SK-N-SH (cell line): ENCODE measurements at regions of chr7 and their contacts with region 1.

Region 1: GRCh38 chr7:29748286-29749108 is 57.8 kb upstream of the WIPF3 start:
- DNase-seq: peak; percentile 24
- H3K4me3 ChIP-seq: no peak overlapping the region; a peak in 1 of 4 replicates
- H3K27ac ChIP-seq: no peak overlapping the region
- H3K4me1 ChIP-seq: no peaks in the 10 kb centered on the region
- H3K27me3 ChIP-seq: 0 out of 2 replicates have a peak, but pooled peaks cover 3% of the 10 kb centered on the region
- CTCF ChIP-seq: peak; percentile 83
- EP300 ChIP-seq: no peak
- RAD21 ChIP-seq: peak; percentile 82

Region 2: DNA sequence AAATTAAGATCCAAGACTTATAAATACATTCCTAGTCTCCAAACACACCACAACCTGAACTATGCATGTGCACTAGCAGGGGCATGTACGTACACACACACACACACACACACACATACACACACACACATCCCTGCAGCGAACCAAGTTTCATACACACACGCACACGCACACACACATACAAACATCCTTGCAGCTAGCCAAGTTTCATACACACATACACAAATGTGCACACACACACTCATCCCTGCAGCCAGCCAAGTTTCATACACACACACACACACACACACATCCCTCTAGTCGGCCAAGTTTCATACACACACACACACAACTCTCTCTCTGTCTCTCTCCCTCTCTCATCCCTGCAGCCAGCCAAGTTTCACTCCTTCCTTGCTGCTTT is 24.9 kb before region 1 on chr7:
- CTCF ChIA-PET with region 1: interaction called, 12 read pairs
- POLR2A ChIA-PET with region 1: no interaction called
- DNase-seq: no peak
- H3K4me3 ChIP-seq: no peak overlapping the region
- H3K27ac ChIP-seq: no peak overlapping the region
- H3K4me1 ChIP-seq: no peaks in the 10 kb centered on the region; a peak in 1 of 4 replicates
- H3K27me3 ChIP-seq: no peaks in the 10 kb centered on the region
- CTCF ChIP-seq: no peak
- EP300 ChIP-seq: no peak
- RAD21 ChIP-seq: no peak

Region 3: GRCh38 chr7:29764227-29764626 is 15.7 kb after region 1 on chr7:
- CTCF ChIA-PET with region 1: interaction called, 14 read pairs
- POLR2A ChIA-PET with region 1: no interaction called
- DNase-seq: peak; percentile 20
- H3K4me3 ChIP-seq: no peak overlapping the region
- H3K27ac ChIP-seq: no peak overlapping the region
- H3K4me1 ChIP-seq: peaks cover 0 to 4% of the 10 kb centered on the region in 2 experiments; a peak in 1 of 4 replicates
- H3K27me3 ChIP-seq: peaks cover 8% of the 10 kb centered on the region; the same call in 1 of the 2 replicates
- CTCF ChIP-seq: no peak
- EP300 ChIP-seq: no peak
- RAD21 ChIP-seq: peak; percentile 51

Region 4: DNA sequence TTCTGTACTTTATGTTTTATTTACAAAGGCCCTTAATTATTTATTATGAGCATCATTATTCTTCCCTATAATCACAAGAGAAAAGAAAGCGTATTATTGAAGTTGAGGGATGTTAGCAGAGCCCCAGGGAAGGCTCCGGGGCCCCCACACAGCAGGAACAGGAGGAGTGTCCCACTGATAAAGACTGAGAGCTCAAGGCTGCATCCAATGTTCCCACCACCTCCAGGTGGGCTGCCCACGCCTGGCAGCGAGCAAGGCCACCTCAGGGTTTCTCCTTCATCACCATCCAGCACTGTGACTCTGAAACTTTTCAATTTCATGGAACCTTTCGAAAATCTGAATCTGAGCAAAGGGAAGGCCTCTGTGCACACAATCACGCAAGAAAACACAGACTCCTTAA is 21.9 kb after region 1 on chr7:
- CTCF ChIA-PET with region 1: interaction called, 10 read pairs
- POLR2A ChIA-PET with region 1: no interaction called
- DNase-seq: no peak
- H3K4me3 ChIP-seq: no peak overlapping the region
- H3K27ac ChIP-seq: peak overlapping the region in 1 of 2 experiments; percentile 89; a peak in 2 of 4 replicates
- H3K4me1 ChIP-seq: peaks cover 0 to 15% of the 10 kb centered on the region in 2 experiments; a peak in 2 of 4 replicates
- H3K27me3 ChIP-seq: peaks cover 18% of the 10 kb centered on the region; the same call in 1 of the 2 replicates
- CTCF ChIP-seq: no peak
- EP300 ChIP-seq: no peak
- RAD21 ChIP-seq: no peak

Region 5: GRCh38 chr7:29888006-29888405 is 139.5 kb after region 1 on chr7:
- CTCF ChIA-PET with region 1: no interaction called
- POLR2A ChIA-PET with region 1: no interaction called
- DNase-seq: no peak
- H3K4me3 ChIP-seq: no peak overlapping the region
- H3K27ac ChIP-seq: no peak overlapping the region
- H3K4me1 ChIP-seq: peaks cover 0 to 16% of the 10 kb centered on the region in 2 experiments; a peak in 1 of 4 replicates
- H3K27me3 ChIP-seq: no peaks in the 10 kb centered on the region; the same call in 1 of the 2 replicates
- CTCF ChIP-seq: no peak
- EP300 ChIP-seq: no peak
- RAD21 ChIP-seq: no peak